ENCODE measurements at regions of chr21 and their contacts with region 1.

Region 1: DNA sequence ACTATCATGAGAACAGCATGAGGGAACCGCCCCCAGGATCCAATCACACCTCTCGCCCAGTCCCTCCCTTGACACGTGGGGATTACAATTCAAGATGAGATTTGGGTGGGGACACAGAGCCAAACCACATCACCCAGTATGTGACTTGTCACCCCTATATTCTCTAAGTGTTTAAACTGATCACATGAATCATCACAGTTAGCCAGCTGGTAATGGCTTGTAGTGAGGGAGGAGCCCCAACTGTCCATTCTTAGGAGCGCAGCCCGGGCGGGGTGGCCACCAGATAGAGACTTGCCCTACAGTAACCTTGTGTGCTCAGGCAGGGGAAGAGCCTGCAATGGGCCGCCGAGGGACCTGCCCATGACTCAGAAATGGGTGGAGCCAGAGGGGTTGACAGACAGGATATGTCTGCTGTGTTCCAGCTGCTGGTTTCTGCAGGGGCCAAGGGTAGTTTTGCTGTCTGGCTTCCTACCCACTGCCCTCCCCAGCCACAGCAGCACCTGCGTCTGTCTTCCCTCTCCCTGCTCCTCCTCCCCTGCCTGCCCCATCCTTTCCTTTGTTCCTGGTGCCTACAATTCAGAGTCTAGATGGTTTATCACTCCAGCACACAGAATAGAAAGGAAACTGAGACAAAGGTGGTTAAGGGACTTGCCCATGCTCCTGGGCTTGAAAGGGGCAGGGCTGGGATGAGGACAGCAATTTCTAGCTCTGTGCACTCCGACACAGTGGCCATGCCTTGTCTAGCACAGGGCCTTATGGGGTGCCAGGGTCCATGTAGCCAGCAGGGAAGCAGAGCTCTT is 9.2 kb downstream of the ABCG1 start:
- DNase-seq: peak; percentile 89 to 97 (median 95)
- ATAC-seq: peak; percentile 96 to 99 (median 98)
- H3K4me3 ChIP-seq: peak overlapping the region in 1 of 12 donors; percentile 10
- H3K27ac ChIP-seq: peak overlapping the region; percentile 13 to 74 (median 54)
- H3K4me1 ChIP-seq: peaks cover 10 to 63% (median 54%) of the 10 kb centered on the region in 12 donors
- H3K27me3 ChIP-seq: no peaks in the 10 kb centered on the region
- CTCF ChIP-seq: no peak
- POLR2A ChIP-seq: no peak

Region 2: GRCh38 chr21:42176859-42177258 is 51.2 kb before region 1 on chr21:
- intact Hi-C with region 1: loop called in 4 of 10 experiments (anchors 5 to 10 kb)
- DNase-seq: no peak
- ATAC-seq: no peak
- H3K4me3 ChIP-seq: no peak overlapping the region
- H3K27ac ChIP-seq: no peak overlapping the region
- H3K4me1 ChIP-seq: peaks cover 0 to 8% (median 0%) of the 10 kb centered on the region in 12 donors
- H3K27me3 ChIP-seq: no peaks in the 10 kb centered on the region
- CTCF ChIP-seq: no peak
- POLR2A ChIP-seq: no peak

Measured in heart left ventricle (tissue), 16 donors.